ENCODE measurements at regions of chr15 and their contacts with region 1.

Region 1: DNA sequence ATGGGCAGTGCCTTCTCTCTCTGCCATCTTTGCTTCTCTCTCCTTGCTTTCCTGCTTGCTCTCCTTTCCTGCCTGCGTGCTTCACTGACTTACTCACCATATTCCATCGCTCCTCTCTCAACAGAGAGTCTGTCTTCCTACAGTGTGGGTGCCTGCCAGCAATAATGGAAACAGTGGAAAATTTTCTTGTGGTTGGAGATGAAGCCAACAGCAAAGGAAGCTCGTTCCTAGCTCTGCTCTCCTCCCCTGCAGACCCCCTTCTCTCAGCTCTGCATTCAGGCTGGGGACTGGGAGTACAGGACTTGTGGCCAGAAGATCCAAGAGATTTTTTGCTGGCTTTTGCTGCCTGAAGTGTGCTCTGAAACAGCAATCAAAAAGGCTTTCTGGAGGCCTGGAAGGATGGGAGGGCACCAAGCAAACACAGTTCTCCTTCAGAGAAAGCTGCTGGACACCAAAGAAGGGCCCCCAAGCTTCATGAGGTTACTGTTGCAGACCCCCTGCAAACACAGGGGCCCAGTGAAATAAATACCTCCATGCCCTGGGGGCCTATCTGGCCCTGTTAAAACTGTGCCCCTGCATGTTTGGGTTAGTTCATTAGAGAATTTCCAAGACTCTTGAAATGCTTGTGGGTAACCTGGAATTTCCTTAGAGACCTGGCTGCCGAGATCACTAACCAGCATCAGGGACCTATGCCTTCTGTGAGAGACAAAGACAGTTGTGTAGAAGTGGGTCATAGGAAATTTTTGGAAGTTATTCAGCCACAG is 149.9 kb upstream of the RASGRP1 start:
- DNase-seq: peak in 1 of 2 experiments; percentile 51
- H3K4me3 ChIP-seq: no peak overlapping the region
- H3K27ac ChIP-seq: no peak overlapping the region
- H3K4me1 ChIP-seq: no peaks in the 10 kb centered on the region
- H3K27me3 ChIP-seq: no peaks in the 10 kb centered on the region
- CTCF ChIP-seq: no peak

Region 2: DNA sequence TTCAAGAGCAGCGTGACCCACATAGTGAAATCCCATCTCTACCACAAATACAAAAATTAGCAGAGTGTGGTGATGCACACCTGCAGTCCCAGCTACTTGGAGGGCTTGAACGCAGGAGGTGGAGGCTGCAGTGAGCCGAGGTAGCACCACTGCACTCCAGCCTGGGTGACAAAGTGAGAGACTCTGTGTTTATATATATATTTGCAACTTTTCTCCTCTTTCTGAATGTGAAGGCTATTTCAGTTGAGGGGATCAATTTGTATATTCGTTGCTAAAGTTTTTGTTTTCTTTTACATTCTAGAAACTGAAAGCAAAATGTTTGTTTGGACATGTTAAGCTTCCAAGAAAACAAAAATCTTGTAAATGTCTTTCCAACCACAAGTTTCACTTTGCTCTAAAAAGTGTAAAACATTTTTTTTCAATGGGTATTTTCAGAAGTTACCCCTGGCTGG is 290.4 kb before region 1 on chr15:
- CTCF ChIA-PET with region 1: no interaction called
- POLR2A ChIA-PET with region 1: no interaction called
- intact Hi-C with region 1: no loop called
- DNase-seq: no peak
- H3K4me3 ChIP-seq: no peak overlapping the region
- H3K27ac ChIP-seq: no peak overlapping the region
- H3K4me1 ChIP-seq: no peaks in the 10 kb centered on the region
- H3K27me3 ChIP-seq: no peaks in the 10 kb centered on the region
- CTCF ChIP-seq: no peak

Region 3: GRCh38 chr15:38593524-38593923 is 121.0 kb before region 1 on chr15:
- CTCF ChIA-PET with region 1: no interaction called
- POLR2A ChIA-PET with region 1: no interaction called
- intact Hi-C with region 1: no loop called
- DNase-seq: peak; percentile 52 to 69
- H3K4me3 ChIP-seq: no peak overlapping the region
- H3K27ac ChIP-seq: peak overlapping the region; percentile 53
- H3K4me1 ChIP-seq: peaks cover 38% of the 10 kb centered on the region
- H3K27me3 ChIP-seq: no peaks in the 10 kb centered on the region
- CTCF ChIP-seq: no peak

Region 4: GRCh38 chr15:39495871-39496840 is 781.7 kb after region 1 on chr15:
- CTCF ChIA-PET with region 1: no interaction called
- POLR2A ChIA-PET with region 1: interaction called, 19 read pairs
- intact Hi-C with region 1: no loop called
- DNase-seq: no peak
- H3K4me3 ChIP-seq: no peak overlapping the region
- H3K27ac ChIP-seq: no peak overlapping the region
- H3K4me1 ChIP-seq: no peaks in the 10 kb centered on the region
- H3K27me3 ChIP-seq: no peaks in the 10 kb centered on the region
- CTCF ChIP-seq: no peak

Measured in PC-9 (cell line).